ENCODE measurements at regions of chr2 and their contacts with region 1.

Region 1: GRCh38 chr2:171522052-171522787 is at the start of gene CYBRD1:
- DNase-seq: peak; percentile 83
- H3K4me3 ChIP-seq: peak within 1 kb of the TSS; percentile 59 to 78
- H3K27ac ChIP-seq: peak within 1 kb of the TSS; percentile 91 to 93
- H3K4me1 ChIP-seq: no peaks in the 10 kb centered on the region
- H3K27me3 ChIP-seq: no peaks in the 10 kb centered on the region
- CTCF ChIP-seq: peak in 1 of 4 experiments; percentile 5
- POLR2A ChIP-seq: peak; percentile 84
- total RNA-seq, gene CYBRD1: 67.9 to 130 TPM

Region 2: DNA sequence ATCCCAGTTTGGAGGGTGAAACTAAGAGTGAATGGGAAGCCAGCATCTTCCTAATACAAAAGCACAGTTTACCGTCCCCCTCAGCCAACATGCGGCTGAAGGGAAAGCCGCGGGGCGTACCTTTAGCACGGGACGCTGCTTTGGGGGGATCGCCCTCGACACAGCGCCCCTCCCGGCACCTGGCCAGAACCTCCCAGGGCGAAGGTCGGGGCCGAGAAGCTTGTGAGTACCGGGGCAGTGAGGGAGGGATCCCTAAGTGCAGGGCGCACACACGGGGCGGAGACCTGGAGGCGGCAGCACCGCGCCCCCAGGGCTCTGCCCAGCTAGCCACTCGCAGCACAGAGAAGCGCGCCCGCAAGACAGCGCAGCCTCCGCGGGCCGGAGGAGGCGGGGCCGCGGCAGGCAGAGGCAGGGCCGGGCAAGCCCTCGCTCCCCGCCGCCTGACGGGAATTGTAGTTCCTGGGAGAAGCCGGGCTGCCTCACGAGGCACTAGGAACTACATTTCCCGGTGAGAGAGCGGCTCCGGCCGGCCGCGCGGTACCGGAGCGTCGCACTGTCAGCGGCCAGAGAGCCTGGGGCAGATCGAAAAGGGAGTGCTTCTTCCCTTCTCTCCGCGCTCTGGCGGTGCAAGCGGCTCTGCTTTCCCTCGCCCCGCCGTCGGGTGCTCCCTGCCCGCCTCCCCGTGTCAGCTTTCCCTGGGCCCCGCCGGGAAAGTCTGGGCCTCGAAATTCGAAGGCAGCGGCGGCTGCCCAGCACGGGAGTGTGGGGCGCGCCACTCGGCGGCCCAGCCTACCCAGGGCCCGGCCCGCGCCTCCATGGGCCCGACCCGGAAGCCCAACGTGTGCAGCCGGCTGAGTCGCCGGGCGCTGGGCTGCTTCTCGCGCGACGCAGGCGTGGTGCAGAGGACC is 88.2 kb before region 1 on chr2 and contains the starts of genes DCAF17 and METTL8:
- intact Hi-C with region 1: loop called (anchors 2 kb)
- DNase-seq: peak; percentile 95
- H3K4me3 ChIP-seq: peak within 1 kb of the TSS; percentile 72 to 84
- H3K27ac ChIP-seq: peak within 1 kb of the TSS; percentile 92 to 94
- H3K4me1 ChIP-seq: no peaks in the 10 kb centered on the region
- H3K27me3 ChIP-seq: no peaks in the 10 kb centered on the region
- CTCF ChIP-seq: peak in 2 of 4 experiments; percentile 52
- POLR2A ChIP-seq: no peak
- total RNA-seq, gene DCAF17: 15.5 to 19.1 TPM
- total RNA-seq, gene METTL8: 8.1 to 18.0 TPM

Measured in prostate gland (tissue), 2 donors.